Right ventricle myocardium inferior (tissue), 1 donor: ENCODE measurements at regions of chr4 and their contacts with region 1.

Region 1: GRCh38 chr4:94757192-94758139 is at the start of gene BMPR1B:
- DNase-seq: no peak
- ATAC-seq: peak; percentile 31
- total RNA-seq, gene BMPR1B: 1.4 TPM

Region 2: GRCh38 chr4:94665500-94666404 is 91.7 kb before region 1 on chr4:
- intact Hi-C with region 1: no loop called
- DNase-seq: no peak
- ATAC-seq: no peak

Region 3: DNA sequence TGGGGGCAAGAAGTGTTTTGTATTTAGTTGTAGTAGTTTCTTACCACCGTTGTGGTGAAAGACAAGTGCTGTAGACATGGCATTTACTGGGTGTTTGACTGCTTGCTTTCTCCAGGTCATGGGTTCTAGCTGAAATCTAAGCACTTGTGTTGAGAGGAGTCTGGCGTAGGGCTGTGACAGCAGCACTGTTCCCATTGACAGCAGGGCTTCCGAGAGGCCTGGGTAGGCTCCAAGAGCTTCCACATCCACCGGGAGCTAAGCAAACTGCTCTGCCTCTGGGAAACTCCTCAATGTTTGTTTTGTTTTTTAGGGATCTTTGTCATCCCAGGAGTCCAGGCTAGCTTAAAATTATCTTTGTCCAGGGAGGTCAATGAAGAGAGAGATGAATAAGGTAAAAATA is 44.6 kb after region 1 on chr4:
- intact Hi-C with region 1: loop called (anchors 2 kb)
- DNase-seq: no peak
- ATAC-seq: peak; percentile 96